ENCODE measurements at regions of chr12 and their contacts with region 1.

Region 1: GRCh38 chr12:48957141-48958048 is at the start of gene ARF3:
- DNase-seq: peak; percentile 90 to 96 (median 92)
- H3K4me3 ChIP-seq: peak within 1 kb of the TSS; percentile 83
- H3K4me3 Mint-ChIP-seq: peak within 1 kb of the TSS; percentile 93 to 99 (median 96)
- H3K27ac ChIP-seq: peak within 1 kb of the TSS; percentile 84
- H3K27ac Mint-ChIP-seq: peak within 1 kb of the TSS; percentile 68 to 97 (median 93)
- H3K4me1 ChIP-seq: peaks cover 33% of the 10 kb centered on the region
- H3K4me1 Mint-ChIP-seq: peaks cover 35 to 54% (median 44%) of the 10 kb centered on the region in 3 donors
- H3K27me3 ChIP-seq: no peaks in the 10 kb centered on the region
- H3K27me3 Mint-ChIP-seq: peaks cover 0 to 6% of the 10 kb centered on the region in 2 donors
- total RNA-seq, gene ARF3: 91.5 to 91.8 TPM

Region 2: GRCh38 chr12:48969833-48970701 is 12.7 kb after region 1 on chr12:
- CTCF ChIA-PET with region 1: interaction called, 20 read pairs
- POLR2A ChIA-PET with region 1: interaction called, 3 read pairs
- DNase-seq: peak in 4 of 5 donors; percentile 28 to 61 (median 32)
- H3K4me3 ChIP-seq: peak overlapping the region; percentile 39
- H3K4me3 Mint-ChIP-seq: peak overlapping the region; percentile 24 to 82 (median 63)
- H3K27ac ChIP-seq: no peak overlapping the region
- H3K27ac Mint-ChIP-seq: peak overlapping the region in 1 of 8 donors; percentile 11
- H3K4me1 ChIP-seq: peaks cover 36% of the 10 kb centered on the region
- H3K4me1 Mint-ChIP-seq: peaks cover 19 to 37% (median 22%) of the 10 kb centered on the region in 3 donors
- H3K27me3 ChIP-seq: peaks cover 42% of the 10 kb centered on the region
- H3K27me3 Mint-ChIP-seq: peaks cover 30 to 34% of the 10 kb centered on the region in 2 donors

Region 3: DNA sequence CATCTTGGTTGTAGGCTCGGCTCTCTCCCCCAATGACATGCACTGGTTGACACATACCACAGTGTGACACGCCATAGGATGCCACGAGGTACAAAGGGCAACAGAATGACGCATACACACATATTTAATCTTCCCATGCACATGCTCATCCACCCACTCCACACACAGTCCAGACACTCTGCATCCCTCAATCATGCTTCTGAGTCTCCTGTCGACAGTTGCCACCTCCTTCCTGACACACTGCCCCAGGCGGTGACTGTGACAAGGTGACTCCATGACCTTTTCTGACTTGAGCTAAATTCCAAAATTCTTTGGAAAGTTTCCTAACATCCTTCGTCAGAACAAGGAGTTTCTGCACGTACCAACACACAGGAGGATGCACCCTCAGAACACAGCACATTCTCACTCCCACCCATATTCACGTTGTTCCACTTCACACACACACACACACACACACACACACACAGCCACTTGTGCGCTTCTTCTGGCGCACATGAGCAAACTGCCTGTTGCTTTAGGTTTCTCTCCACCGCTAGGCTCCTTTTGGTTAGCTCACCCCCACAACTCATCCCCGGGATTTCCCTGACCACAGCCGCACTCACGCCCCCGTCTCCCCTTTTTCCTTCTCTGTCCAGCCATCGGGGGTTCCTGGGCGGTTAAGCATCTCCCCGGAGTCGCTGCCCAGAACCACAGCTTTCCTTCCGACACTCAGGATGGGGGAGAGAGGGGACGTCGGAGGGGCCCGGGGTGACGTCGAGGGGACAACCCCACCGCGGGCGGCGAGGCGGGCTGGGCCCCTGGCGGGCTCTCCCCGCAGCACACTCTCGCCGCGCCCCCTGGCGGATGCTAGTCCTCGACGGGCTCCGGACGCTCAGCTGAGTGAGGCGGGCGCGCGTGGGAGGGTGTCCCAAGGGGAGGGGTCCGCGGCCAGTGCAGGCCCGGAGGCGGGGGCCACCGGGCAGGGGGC is 20.2 kb after region 1 on chr12:
- CTCF ChIA-PET with region 1: interaction called, 50 read pairs
- POLR2A ChIA-PET with region 1: interaction called, 18 read pairs
- DNase-seq: peak; percentile 77 to 87 (median 80)
- H3K4me3 ChIP-seq: peak overlapping the region; percentile 89
- H3K4me3 Mint-ChIP-seq: peak overlapping the region; percentile 63 to 73 (median 71)
- H3K27ac ChIP-seq: no peak overlapping the region
- H3K27ac Mint-ChIP-seq: peak overlapping the region in 7 of 8 donors; percentile 36 to 93 (median 87)
- H3K4me1 ChIP-seq: peaks cover 49% of the 10 kb centered on the region
- H3K4me1 Mint-ChIP-seq: peaks cover 43 to 58% (median 51%) of the 10 kb centered on the region in 3 donors
- H3K27me3 ChIP-seq: peaks cover 25% of the 10 kb centered on the region
- H3K27me3 Mint-ChIP-seq: peaks cover 12 to 22% of the 10 kb centered on the region in 2 donors

Measured in CD8-positive, alpha-beta memory T cell (primary cell).